GM13976 (cell line): ENCODE measurements at regions of chr2 and their contacts with region 1.

Region 1: GRCh38 chr2:187429989-187430388 is 18.1 kb downstream of the CALCRL start:
- DNase-seq: no peak
- CTCF ChIP-seq: no peak

Region 2: DNA sequence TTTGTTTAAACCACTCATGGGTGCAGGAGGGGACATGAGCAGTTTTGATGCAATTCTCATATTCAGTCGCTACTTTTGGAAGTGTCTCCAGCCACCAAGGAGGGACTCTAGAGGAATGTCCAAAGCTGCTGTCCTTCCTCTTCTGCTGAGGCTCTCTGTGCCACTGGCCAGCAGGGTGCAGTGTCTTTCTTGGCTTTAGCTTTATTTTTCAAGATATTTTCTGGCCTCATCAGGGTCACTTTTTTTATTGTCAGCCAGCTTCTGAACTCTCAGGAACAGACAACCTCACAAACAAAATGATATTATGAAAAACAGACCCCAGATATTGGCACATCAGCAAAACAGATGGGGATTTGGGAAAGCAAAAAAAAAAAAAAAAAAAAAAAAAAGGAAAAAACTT is 291.7 kb before region 1 on chr2:
- in situ Hi-C with region 1: loop called (anchors 25 kb)
- DNase-seq: no peak
- CTCF ChIP-seq: peak; percentile 57